GM10248 (cell line): ENCODE measurements at regions of chr20 and their contacts with region 1.

Region 1: DNA sequence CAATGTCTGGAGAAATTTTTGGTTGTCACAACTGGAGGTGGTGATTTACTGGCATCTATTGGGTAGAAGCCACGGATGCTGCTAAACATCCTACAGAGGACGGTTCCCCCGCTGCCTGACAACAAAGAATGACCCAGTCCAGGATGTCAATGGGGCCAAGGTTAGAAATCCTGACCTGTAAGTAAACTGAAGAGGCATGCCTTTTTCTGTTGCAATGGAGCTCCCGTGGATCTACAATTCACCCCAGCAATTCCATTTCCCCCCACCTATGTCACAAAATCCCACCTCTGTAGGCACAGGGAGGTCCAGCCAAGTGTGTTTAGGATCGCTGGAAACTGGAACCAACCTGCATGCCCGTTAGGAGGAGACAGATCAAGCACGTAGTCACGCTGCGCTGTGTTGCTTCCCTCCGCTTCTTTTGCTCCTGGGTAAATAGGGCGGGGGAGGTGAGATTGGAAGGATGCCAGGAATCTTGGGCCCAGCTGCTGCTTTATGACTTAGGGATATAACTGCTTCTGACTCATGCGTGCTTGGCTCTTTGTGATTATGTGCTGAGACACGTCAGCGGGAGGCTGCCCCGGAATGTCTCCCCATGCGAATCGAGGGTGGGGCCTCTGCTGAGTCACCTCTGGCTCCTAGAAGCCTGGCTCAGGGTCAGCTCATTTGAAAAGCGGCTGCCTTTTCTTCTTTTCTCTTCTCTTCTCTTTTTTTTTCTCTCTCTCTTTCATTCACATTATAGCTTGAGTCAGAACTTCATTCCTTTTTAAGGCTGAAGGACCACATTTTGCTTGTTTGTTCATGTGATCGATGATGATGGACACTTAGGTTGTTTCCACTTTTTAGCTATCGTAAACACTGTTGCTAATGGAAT is 12.4 kb upstream of the PEDS1 start:
- DNase-seq: peak; percentile 90
- CTCF ChIP-seq: no peak

Region 2: DNA sequence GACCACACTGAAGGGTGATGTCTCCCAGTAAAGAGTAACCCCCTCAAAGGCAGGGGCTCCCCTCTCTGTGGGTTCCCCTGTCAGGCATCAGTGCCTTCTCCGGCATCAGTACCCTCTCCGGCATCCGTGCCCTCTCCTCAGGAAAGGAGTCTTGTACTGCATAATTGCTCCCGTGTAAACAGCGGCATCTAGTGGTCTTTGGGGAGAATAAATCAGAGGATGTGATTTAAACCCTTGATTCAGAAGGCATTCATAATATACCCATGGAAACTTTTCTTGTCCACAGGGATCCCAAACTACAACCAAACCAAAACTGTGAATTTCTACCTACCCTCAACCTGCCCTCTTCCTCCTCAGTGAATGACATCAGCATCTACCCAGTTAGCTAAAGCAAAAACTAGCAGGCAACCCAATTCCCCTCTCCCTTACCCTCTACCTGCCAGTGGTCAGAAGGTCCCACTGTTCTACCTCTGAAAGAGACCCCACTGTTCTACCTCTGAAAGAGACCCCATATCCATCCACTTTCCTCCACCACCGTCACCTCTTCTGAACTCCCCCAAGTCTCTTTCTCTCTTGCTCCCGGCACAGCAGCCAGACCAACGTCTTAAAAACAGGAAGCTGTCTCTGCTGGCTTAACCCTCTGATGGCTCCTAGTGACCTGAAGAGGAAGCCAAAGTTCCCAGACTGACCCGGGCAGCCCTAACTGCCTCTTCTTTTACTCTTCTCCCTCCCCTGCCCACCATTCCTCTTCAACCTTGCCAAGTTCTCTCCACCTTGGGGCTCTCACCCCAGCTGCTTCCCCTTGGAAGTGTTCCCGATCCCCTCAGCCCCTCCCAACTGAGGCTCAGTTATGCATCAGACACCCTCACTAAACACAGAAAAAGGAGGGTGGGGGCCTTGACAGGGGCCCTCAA is 80.2 kb before region 1 on chr20:
- CTCF ChIA-PET with region 1: interaction called, 13 read pairs
- POLR2A ChIA-PET with region 1: no interaction called
- DNase-seq: peak; percentile 72
- CTCF ChIP-seq: peak; percentile 77

Region 3: DNA sequence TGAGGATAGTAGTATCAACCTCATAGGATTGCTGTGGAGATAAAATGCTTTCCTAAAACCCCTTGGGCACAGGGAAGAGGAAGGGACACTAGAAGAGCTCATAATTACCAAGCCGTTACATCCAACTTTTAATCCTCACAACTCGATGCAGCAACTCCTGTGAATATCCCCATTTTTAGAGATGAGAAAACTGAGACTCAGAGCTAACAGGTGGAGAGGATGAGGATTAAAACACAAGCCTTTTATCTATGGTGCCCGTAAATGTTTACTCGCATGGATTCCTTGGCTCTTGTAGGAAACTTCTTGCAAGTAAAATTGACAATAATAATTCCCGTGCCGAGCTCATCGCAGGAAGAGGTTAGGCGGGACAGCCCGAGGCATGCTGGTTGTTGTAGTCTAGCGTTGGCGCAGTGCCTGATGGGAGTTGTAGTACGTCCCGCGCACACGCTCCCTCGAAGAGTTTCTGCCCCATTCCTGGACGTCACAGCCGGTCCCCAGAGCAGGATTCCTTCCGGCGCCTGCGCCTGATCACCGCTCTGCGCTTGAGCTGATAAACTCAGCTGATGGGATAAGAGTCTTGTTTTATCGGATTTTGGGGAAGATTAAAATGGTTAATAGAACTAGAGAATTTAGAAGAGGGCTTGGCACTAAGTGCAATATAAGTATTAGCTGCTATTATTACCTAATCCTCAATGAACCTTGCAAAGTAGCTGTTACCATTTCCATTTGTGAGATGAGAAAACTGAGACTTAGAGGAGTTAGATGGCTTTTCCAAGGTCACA is 50.1 kb before region 1 on chr20:
- CTCF ChIA-PET with region 1: interaction called, 38 read pairs
- POLR2A ChIA-PET with region 1: interaction called, 3 read pairs
- DNase-seq: peak; percentile 91
- CTCF ChIP-seq: no peak

Region 4: GRCh38 chr20:50120897-50121693 is 44.8 kb before region 1 on chr20:
- CTCF ChIA-PET with region 1: interaction called, 38 read pairs
- POLR2A ChIA-PET with region 1: interaction called, 3 read pairs
- DNase-seq: no peak
- CTCF ChIP-seq: peak; percentile 50

Region 5: GRCh38 chr20:50153485-50154377 is 12.2 kb before region 1 on chr20 and contains the start of gene PEDS1:
- CTCF ChIA-PET with region 1: interaction called, 24 read pairs
- POLR2A ChIA-PET with region 1: interaction called, 5 read pairs
- DNase-seq: peak; percentile 99
- CTCF ChIP-seq: no peak

Region 6: DNA sequence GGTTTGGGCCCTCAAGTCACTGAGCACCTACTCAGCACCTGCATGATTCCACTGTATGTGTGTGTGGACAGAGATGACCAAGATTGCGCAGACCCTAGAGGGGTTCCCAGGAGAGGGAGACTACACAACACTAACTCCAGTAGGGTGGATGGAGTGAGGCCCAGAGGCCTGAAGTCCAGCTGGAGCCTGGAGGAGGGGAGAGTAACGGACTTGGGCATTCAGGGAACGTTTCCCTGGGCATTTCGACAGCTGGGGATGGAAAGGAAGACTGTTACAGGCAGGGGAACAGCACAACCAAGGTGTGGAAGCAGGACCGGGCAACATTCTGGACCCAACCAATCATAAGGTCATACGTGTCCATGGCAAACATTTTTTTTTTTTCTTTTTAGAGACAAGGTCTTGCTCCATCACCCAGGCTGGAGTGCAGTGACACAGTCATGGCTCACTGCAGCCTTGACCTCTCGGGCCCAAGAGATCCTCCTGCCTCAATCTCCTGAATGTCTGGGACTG is 13.6 kb after region 1 on chr20:
- CTCF ChIA-PET with region 1: interaction called, 29 read pairs
- POLR2A ChIA-PET with region 1: no interaction called
- DNase-seq: no peak
- CTCF ChIP-seq: no peak